Activated T-helper 2 cell treated with anti-CD3 and anti-CD28 coated beads, Interferon-gamma antibody, Interleukin-2, Interleukin-4, amounts not matched to agents 10 μg/mL and 5 μg/mL and 100 μg/mL, durations not matched to agents 14 hours and 24 hours and 36 hours (primary cell): ENCODE measurements at regions of chr2 and their contacts with region 1.

Region 1: GRCh38 chr2:12931186-12931844 is 214.6 kb downstream of the TRIB2 start:
- DNase-seq: no peak
- H3K4me3 Mint-ChIP-seq: no peak overlapping the region
- H3K27ac Mint-ChIP-seq: no peak overlapping the region
- H3K4me1 Mint-ChIP-seq: peaks cover 12% of the 10 kb centered on the region
- H3K27me3 Mint-ChIP-seq: peaks cover 47% of the 10 kb centered on the region

Region 2: GRCh38 chr2:11863513-11864328 is 1067.6 kb before region 1 on chr2:
- intact Hi-C with region 1: loop called (anchors 10 kb)
- DNase-seq: peak; percentile 47
- H3K4me3 Mint-ChIP-seq: no peak overlapping the region
- H3K27ac Mint-ChIP-seq: no peak overlapping the region
- H3K4me1 Mint-ChIP-seq: peaks cover 9% of the 10 kb centered on the region
- H3K27me3 Mint-ChIP-seq: peaks cover 13% of the 10 kb centered on the region

Region 3: DNA sequence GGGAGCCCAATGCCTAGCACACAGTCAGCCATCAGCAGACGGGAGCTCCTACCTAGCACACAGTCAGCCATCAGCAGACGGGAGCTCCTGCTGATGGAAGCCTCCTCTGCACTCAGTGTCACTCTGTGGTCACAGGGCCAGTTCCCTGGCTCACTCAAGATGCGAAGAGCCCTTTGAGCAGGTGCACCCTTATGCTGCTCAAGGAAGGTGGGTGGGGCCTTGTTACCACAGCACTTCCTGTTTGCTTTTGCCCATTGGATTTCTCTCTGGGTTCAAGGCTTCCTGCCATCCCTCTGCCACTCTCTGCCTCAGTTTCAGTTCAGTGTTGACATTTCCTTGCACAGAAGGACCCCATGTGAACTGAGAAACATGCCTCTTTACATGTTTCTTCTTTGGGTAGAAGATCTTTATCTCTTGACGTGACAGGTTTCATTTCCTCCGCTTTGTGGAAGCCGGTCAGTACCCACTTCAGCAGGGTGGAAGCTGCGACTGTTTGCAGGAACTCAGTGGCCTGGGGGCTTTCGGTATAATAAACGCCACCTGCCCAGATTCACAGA is 203.0 kb before region 1 on chr2:
- intact Hi-C with region 1: loop called (anchors 5 kb)
- DNase-seq: peak; percentile 75
- H3K4me3 Mint-ChIP-seq: peak overlapping the region; percentile 45
- H3K27ac Mint-ChIP-seq: peak overlapping the region; percentile 25
- H3K4me1 Mint-ChIP-seq: peaks cover 56% of the 10 kb centered on the region
- H3K27me3 Mint-ChIP-seq: no peaks in the 10 kb centered on the region